HCT116 (cell line): ENCODE measurements at regions of chr1 and their contacts with region 1.

Region 1: GRCh38 chr1:91617285-91617765 is 116.7 kb downstream of the CDC7 start:
- DNase-seq: no peak
- ATAC-seq: peak; percentile 84
- H3K4me3 ChIP-seq: no peak overlapping the region
- H3K27ac ChIP-seq: no peak overlapping the region
- H3K4me1 ChIP-seq: peaks cover 5 to 20% of the 10 kb centered on the region in 2 experiments
- H3K27me3 ChIP-seq: no peaks in the 10 kb centered on the region
- CTCF ChIP-seq: peak; percentile 46 to 91 (median 48)
- POLR2A ChIP-seq: no peak
- RAD21 ChIP-seq: peak; percentile 71

Region 2: DNA sequence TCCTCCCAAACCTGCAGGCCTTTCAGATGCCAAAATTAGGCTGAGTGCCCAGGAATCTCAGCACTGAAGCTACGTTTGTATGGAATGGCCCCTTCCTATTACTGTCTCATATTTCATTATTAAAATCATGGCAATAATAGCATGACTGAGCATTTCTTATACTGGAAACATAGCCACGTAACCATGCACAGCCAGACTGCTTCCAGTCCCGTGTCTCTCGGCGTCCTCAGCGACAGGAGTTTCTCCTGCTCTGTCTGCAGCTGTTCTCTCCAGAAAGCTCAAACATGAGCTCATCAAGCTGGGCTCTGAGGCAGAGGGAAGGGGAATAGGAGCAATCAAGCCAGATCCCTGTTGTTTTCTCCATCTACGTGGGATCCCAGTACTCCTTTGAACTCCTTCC is 12.7 kb before region 1 on chr1:
- CTCF ChIA-PET with region 1: no interaction called
- POLR2A ChIA-PET with region 1: no interaction called
- RAD21 ChIA-PET with region 1: no interaction called
- intact Hi-C with region 1: no loop called
- DNase-seq: no peak
- ATAC-seq: no peak
- H3K4me3 ChIP-seq: no peak overlapping the region
- H3K27ac ChIP-seq: no peak overlapping the region
- H3K4me1 ChIP-seq: peaks cover 5 to 13% of the 10 kb centered on the region in 2 experiments; a peak in 3 of 4 replicates
- H3K27me3 ChIP-seq: no peaks in the 10 kb centered on the region
- CTCF ChIP-seq: no peak
- POLR2A ChIP-seq: no peak
- RAD21 ChIP-seq: no peak

Region 3: DNA sequence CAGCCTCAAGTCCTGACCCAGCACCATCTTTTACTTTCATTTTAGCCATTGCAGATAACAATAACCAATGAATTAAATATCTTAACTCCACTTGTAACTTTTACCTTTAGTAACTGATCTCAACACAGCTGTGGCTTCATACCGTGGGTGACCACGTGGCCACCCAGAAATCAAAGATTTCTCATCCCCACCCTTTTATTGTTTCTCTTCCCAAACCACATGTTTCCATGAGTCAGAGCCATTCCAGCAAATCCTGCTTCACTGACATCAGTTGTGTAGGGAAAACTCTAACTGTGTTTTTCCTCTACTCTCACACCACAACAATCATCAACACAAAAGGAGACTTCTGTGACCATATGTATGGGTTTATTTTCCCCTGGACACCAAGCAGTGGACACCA is 306.8 kb after region 1 on chr1:
- CTCF ChIA-PET with region 1: no interaction called
- POLR2A ChIA-PET with region 1: no interaction called
- RAD21 ChIA-PET with region 1: no interaction called
- intact Hi-C with region 1: loop called (anchors 2 kb)
- DNase-seq: no peak
- ATAC-seq: no peak
- H3K4me3 ChIP-seq: no peak overlapping the region
- H3K27ac ChIP-seq: no peak overlapping the region
- H3K4me1 ChIP-seq: peaks cover 4 to 9% of the 10 kb centered on the region in 2 experiments; a peak in 1 of 4 replicates
- H3K27me3 ChIP-seq: no peaks in the 10 kb centered on the region
- CTCF ChIP-seq: no peak
- POLR2A ChIP-seq: no peak
- RAD21 ChIP-seq: no peak

Region 4: DNA sequence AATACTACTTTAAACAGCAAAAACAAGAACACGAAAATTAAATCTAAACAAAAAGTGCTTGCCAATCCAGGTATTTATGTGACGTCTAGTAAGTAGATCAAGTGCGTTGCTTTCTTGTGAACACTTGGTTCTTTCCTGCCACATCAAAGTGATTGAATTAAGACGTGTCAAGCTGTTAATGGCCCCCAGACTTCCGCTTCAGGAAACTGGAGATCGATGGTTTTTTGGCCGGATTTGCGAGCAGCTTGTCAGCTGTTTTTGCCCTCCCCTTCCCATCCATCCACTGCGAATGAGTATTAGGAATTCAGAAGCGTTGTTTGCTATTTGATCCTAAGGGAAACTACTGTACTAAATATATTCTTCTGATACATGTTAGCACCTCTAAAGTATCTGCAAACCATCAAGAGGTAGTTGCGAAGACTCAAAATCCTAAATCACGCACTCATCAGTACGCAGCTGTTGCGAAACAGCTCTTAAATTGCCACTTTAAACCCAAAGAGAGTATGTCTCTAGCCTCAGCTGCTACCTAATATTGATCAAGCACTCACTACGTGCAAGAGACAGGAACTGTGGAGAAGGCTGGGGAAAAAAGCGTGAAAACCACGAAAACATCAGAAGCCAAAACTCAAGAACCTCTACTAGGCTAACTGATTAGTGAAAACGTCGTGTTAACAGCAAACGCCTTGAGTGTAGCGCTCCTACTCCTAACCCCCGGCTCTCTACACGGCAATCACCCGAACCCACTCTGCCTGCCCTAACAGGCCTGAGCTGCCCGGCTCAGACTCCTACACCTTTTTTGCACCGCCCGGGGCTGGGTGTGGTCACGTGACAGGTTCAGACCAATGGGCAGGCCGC is 331.4 kb after region 1 on chr1:
- CTCF ChIA-PET with region 1: no interaction called
- POLR2A ChIA-PET with region 1: no interaction called
- RAD21 ChIA-PET with region 1: no interaction called
- intact Hi-C with region 1: no loop called
- DNase-seq: no peak
- ATAC-seq: no peak
- H3K4me3 ChIP-seq: no peak overlapping the region
- H3K27ac ChIP-seq: no peak overlapping the region
- H3K4me1 ChIP-seq: no peaks in the 10 kb centered on the region
- H3K27me3 ChIP-seq: no peaks in the 10 kb centered on the region
- CTCF ChIP-seq: no peak
- POLR2A ChIP-seq: no peak
- RAD21 ChIP-seq: no peak